Sigmoid colon (tissue), 7 donors: ENCODE measurements at regions of chr20 and their contacts with region 1.

Region 1: GRCh38 chr20:51121901-51122441 is 99.1 kb upstream of the KCNG1 start:
- DNase-seq: peak; percentile 34
- H3K4me3 ChIP-seq: no peak overlapping the region
- H3K27ac ChIP-seq: peak overlapping the region in 2 of 4 donors; percentile 8 to 38
- H3K4me1 ChIP-seq: peaks cover 0 to 76% (median 55%) of the 10 kb centered on the region in 4 donors
- H3K27me3 ChIP-seq: peaks cover 0 to 20% (median 0%) of the 10 kb centered on the region in 3 donors
- CTCF ChIP-seq: no peak
- EP300 ChIP-seq: no peak
- POLR2A ChIP-seq: no peak

Region 2: DNA sequence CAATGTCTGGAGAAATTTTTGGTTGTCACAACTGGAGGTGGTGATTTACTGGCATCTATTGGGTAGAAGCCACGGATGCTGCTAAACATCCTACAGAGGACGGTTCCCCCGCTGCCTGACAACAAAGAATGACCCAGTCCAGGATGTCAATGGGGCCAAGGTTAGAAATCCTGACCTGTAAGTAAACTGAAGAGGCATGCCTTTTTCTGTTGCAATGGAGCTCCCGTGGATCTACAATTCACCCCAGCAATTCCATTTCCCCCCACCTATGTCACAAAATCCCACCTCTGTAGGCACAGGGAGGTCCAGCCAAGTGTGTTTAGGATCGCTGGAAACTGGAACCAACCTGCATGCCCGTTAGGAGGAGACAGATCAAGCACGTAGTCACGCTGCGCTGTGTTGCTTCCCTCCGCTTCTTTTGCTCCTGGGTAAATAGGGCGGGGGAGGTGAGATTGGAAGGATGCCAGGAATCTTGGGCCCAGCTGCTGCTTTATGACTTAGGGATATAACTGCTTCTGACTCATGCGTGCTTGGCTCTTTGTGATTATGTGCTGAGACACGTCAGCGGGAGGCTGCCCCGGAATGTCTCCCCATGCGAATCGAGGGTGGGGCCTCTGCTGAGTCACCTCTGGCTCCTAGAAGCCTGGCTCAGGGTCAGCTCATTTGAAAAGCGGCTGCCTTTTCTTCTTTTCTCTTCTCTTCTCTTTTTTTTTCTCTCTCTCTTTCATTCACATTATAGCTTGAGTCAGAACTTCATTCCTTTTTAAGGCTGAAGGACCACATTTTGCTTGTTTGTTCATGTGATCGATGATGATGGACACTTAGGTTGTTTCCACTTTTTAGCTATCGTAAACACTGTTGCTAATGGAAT is 956.1 kb before region 1 on chr20:
- intact Hi-C with region 1: no loop called
- DNase-seq: peak; percentile 100
- H3K4me3 ChIP-seq: peak overlapping the region in 3 of 4 donors; percentile 16 to 42 (median 33)
- H3K27ac ChIP-seq: peak overlapping the region; percentile 86
- H3K4me1 ChIP-seq: peaks cover 0 to 28% (median 20%) of the 10 kb centered on the region in 4 donors
- H3K27me3 ChIP-seq: no peaks in the 10 kb centered on the region
- CTCF ChIP-seq: no peak
- EP300 ChIP-seq: peak in 3 of 4 donors; percentile 53 to 96 (median 82)
- POLR2A ChIP-seq: no peak

Region 3: GRCh38 chr20:51156041-51156982 is 34.3 kb after region 1 on chr20:
- intact Hi-C with region 1: loop called (anchors 2 kb)
- DNase-seq: peak; percentile 86
- H3K4me3 ChIP-seq: peak overlapping the region in 2 of 4 donors; percentile 7 to 20
- H3K27ac ChIP-seq: peak overlapping the region; percentile 49 to 62 (median 56)
- H3K4me1 ChIP-seq: peaks cover 0 to 17% (median 14%) of the 10 kb centered on the region in 4 donors
- H3K27me3 ChIP-seq: peaks cover 0 to 27% (median 0%) of the 10 kb centered on the region in 3 donors
- CTCF ChIP-seq: no peak
- EP300 ChIP-seq: no peak
- POLR2A ChIP-seq: no peak

Region 4: DNA sequence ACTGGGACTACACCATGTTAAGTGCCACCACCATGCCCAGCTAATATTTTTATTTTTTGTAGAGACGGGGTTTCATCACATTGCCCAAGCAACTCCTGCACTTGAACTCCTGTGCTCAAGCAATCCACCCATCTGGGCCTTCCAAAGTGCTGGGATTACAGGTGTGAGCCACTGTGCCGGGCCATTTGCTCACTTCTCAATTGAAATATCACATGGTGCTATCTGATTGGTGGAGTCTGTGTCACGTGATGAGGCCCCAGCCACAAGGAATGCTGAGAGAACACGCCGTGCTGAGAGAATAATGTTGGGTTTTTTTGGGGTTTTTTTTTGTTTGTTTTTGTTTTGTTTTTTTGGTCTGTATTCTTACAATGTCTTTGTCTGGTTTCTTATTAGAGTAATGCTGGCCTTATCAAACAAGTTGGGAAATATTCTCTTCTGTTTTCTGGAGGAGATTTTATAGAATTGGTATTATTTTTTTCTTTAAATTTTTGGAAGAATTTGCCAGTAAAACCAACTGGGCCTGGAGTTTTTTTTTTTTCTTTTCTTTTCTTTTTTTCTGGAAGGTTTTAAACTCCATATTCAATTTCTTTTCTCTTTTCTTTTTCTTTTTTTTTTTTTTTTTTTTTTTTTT is 84.2 kb after region 1 on chr20:
- intact Hi-C with region 1: no loop called
- DNase-seq: no peak
- H3K4me3 ChIP-seq: no peak overlapping the region
- H3K27ac ChIP-seq: no peak overlapping the region
- H3K4me1 ChIP-seq: no peaks in the 10 kb centered on the region
- H3K27me3 ChIP-seq: peaks cover 0 to 2% (median 0%) of the 10 kb centered on the region in 3 donors
- CTCF ChIP-seq: no peak
- EP300 ChIP-seq: no peak
- POLR2A ChIP-seq: no peak

Region 5: GRCh38 chr20:51831866-51832265 is 709.9 kb after region 1 on chr20:
- intact Hi-C with region 1: no loop called
- DNase-seq: no peak
- H3K4me3 ChIP-seq: no peak overlapping the region
- H3K27ac ChIP-seq: no peak overlapping the region
- H3K4me1 ChIP-seq: peaks cover 0 to 5% (median 0%) of the 10 kb centered on the region in 4 donors
- H3K27me3 ChIP-seq: no peaks in the 10 kb centered on the region
- CTCF ChIP-seq: no peak
- EP300 ChIP-seq: no peak
- POLR2A ChIP-seq: no peak